Activated T-helper 2 cell treated with anti-CD3 and anti-CD28 coated beads, Interferon-gamma antibody, Interleukin-2, Interleukin-4, amounts not matched to agents 10 μg/mL and 5 μg/mL and 100 μg/mL, durations not matched to agents 14 hours and 24 hours and 36 hours (primary cell): ENCODE measurements at regions of chr7 and their contacts with region 1.

Region 1: GRCh38 chr7:102236592-102237287 is 49.9 kb upstream of the SH2B2 start:
- DNase-seq: peak; percentile 16
- H3K4me3 Mint-ChIP-seq: no peak overlapping the region
- H3K27ac Mint-ChIP-seq: no peak overlapping the region
- H3K4me1 Mint-ChIP-seq: no peaks in the 10 kb centered on the region
- H3K27me3 Mint-ChIP-seq: no peaks in the 10 kb centered on the region

Region 2: GRCh38 chr7:101602484-101603241 is 634.1 kb before region 1 on chr7:
- intact Hi-C with region 1: loop called (anchors 10 kb)
- DNase-seq: peak; percentile 58
- H3K4me3 Mint-ChIP-seq: no peak overlapping the region
- H3K27ac Mint-ChIP-seq: no peak overlapping the region
- H3K4me1 Mint-ChIP-seq: peaks cover 1% of the 10 kb centered on the region
- H3K27me3 Mint-ChIP-seq: no peaks in the 10 kb centered on the region

Region 3: DNA sequence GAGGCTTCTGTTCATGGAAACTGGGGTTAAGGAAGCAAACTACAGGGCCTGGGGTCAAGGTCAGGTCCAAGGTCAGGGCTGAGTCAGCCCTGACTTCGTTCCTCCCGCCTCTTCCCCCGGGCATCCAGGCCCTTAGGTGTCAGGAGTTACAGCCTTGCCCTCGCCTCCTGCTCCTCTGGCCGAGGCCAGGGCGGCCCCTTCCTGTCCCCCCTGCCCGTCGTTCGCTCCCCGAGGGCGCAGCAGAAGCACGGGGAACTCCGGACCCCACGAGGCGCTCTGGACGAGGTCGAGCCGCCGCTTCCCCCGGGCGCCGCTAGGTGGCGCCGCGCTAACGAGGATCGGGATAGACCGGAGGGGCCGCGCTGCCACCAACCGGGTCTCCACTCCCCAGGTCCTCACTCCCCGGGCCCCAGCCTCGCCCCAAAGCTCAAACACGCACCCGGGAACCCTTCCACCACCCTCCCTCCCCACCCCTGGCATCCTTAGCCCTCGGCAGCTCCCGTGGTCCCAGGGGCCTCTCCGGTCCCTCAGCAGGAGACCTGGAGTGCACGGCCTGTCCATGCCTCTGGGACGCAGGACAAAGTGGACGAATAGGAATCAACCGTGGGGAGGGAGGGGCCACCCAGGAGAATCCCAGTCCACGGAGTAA is 548.4 kb before region 1 on chr7:
- intact Hi-C with region 1: loop called (anchors 2 kb)
- DNase-seq: peak; percentile 71
- H3K4me3 Mint-ChIP-seq: no peak overlapping the region
- H3K27ac Mint-ChIP-seq: no peak overlapping the region
- H3K4me1 Mint-ChIP-seq: peaks cover 5% of the 10 kb centered on the region
- H3K27me3 Mint-ChIP-seq: no peaks in the 10 kb centered on the region

Region 4: DNA sequence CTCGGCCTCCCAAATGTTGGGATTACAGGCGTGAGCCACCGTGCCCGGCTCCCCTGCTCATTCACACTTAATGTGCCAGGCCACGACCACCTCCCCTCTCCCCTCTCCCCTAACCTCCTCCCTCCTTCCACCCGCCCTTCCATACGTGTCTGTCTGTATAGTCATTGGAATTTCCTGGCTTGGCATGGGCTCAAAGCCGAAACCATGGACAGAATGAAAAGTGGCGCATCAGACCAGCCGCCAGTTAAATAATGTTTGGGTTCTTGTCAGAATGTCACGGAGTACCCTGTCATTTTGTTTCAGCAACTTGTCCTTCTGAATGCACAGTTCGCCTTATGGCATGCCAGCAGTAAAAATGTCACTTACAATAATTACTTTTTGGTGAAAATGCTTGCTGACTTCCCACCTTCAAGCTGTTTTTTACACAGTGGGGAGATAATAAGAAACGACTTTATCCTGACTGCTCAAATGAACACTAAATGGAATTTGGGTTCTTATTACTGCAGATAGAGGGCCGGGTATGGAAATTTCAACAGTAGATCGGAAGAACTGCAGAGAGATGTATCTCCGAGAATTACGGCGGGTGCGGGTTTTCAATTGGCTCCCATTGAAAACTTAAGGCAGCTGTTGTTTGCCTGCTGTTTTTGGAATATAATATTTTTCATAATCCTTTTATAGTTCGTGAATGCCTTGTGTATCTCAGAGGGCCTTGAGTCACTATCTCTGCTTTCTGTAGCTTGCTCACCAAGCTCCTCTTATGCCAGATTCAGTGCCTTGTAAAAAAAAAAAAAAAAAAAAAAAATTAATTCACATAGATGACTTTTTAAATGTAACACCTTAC is 15.6 kb before region 1 on chr7:
- intact Hi-C with region 1: no loop called
- DNase-seq: no peak
- H3K4me3 Mint-ChIP-seq: no peak overlapping the region
- H3K27ac Mint-ChIP-seq: no peak overlapping the region
- H3K4me1 Mint-ChIP-seq: peaks cover 4% of the 10 kb centered on the region
- H3K27me3 Mint-ChIP-seq: no peaks in the 10 kb centered on the region